ENCODE measurements at regions of chr1 and their contacts with region 1.

Region 1: DNA sequence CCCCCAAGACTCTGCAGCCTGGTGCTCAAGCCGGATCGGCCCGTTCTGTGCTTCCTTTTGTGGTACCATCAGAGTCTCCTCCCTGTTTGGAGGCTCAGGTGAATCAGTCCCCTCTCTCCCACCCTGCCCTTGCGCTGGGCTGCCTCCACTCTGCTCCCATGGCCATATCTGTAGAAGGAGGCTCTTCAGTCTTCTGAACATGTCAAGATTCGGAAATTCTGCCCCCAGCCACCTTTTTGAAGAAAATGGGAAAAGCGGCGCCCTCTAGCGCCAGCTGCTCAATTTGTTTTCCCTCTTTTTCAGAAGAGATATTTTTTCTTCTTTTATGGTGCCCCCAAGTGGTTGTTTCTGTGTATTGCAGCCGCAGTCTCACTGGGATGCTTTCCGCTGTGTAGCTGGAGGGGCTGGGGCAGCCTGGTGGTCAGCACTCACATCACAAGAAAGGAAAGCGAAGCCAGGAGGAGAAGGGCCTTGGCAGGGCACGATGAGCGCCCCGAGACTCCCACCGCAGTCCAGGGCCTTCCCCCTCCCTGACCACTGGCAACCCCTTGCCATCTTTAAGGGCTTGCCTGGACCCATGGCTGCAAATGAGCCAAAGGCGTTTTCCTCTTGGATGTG is 58.4 kb upstream of the CACNA1E start:
- DNase-seq: peak; percentile 66
- H3K4me3 Mint-ChIP-seq: no peak overlapping the region
- H3K27ac Mint-ChIP-seq: no peak overlapping the region
- H3K4me1 Mint-ChIP-seq: no peaks in the 10 kb centered on the region
- H3K27me3 Mint-ChIP-seq: peaks cover 14% of the 10 kb centered on the region

Region 2: GRCh38 chr1:181189691-181190363 is 235.1 kb before region 1 on chr1:
- intact Hi-C with region 1: loop called (anchors 1 kb)
- DNase-seq: peak; percentile 66
- H3K4me3 Mint-ChIP-seq: no peak overlapping the region
- H3K27ac Mint-ChIP-seq: no peak overlapping the region
- H3K4me1 Mint-ChIP-seq: no peaks in the 10 kb centered on the region
- H3K27me3 Mint-ChIP-seq: peaks cover 17% of the 10 kb centered on the region

Region 3: DNA sequence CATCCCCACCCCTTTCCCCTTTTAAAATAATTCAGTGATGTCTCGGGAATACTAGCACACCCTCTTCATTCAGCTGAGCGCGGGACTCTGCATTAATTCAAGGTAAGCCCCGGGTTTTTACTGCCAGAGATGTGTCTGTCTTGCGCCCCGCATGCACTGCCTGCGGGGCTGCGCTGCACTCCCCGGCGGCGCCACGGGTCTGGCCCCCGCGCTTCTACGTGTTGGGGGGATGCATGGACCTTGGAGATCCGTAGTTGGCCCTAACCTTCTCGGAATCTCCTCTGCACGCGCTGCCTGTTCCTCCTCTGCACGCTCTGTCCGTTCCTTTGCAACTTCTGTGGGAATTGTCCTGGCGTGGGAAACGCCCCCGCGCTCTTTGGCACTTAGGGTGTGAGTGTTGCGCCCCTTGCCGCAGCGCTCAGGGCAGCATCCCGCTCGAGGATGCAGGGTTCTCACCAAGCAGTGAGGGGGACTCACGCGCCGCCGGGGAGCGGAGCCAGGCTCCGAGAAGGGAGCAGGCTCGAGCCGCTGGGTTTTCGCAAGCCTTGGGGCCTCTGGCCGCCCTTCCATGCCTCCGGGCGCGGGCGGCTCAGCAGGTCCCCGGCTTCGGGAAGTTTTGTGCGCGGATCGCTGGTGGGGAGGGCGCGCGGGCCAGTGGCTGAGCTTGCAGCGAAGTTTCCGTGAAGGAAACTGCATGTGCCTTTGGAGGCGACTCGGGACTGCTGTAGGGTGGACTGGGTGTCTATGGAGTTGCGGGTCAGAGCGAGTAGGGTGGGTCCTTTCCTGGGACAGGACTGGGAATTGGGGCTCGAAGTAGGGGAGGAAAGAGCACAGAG is 106.7 kb before region 1 on chr1:
- intact Hi-C with region 1: loop called (anchors 10 kb)
- DNase-seq: no peak
- H3K4me3 Mint-ChIP-seq: peak overlapping the region; percentile 15
- H3K27ac Mint-ChIP-seq: no peak overlapping the region
- H3K4me1 Mint-ChIP-seq: peaks cover 7% of the 10 kb centered on the region
- H3K27me3 Mint-ChIP-seq: peaks cover 66% of the 10 kb centered on the region

Region 4: DNA sequence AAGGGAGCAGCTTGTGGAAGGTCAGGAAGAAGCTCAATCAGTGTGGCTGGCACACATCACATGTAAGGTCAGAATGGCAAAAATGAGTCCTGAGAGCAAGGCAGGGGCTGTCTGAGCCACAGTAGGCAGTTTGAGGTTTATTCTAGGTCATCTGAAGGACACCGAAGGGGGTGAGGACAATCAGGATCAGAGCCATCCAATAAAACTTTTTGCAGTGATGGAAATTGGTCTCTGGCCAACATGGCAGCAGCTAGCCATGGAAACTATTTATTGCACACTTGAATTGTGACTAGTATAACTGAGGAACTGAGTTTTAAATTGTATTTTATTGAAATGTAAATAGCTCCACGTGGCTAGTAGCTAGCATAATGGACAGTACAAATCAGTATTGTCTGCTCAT is 38.6 kb before region 1 on chr1:
- intact Hi-C with region 1: loop called (anchors 5 kb)
- DNase-seq: no peak
- H3K4me3 Mint-ChIP-seq: no peak overlapping the region
- H3K27ac Mint-ChIP-seq: no peak overlapping the region
- H3K4me1 Mint-ChIP-seq: peaks cover 4% of the 10 kb centered on the region
- H3K27me3 Mint-ChIP-seq: peaks cover 9% of the 10 kb centered on the region

Region 5: DNA sequence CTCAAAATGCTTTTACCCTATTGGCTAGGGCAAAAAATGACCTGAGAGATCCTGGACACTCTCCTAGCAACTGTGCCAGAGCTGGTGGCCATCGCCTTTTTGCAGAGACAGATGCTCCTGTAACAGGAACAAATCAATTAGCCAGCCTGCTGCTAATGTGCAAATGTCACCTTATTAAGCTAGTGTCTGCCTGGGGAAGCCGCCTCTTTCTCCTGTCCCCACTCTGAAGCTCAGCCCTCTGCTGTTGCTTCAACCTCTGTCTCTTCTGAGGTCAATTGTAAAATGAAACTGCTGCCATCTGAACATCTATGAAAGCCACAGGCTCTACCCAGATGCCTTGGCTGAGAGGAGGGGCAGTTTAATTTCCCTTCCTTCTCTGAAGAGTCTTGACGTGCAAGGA is 27.1 kb before region 1 on chr1:
- intact Hi-C with region 1: loop called (anchors 2 kb)
- DNase-seq: peak; percentile 12
- H3K4me3 Mint-ChIP-seq: peak overlapping the region; percentile 58
- H3K27ac Mint-ChIP-seq: peak overlapping the region; percentile 42
- H3K4me1 Mint-ChIP-seq: peaks cover 33% of the 10 kb centered on the region
- H3K27me3 Mint-ChIP-seq: no peaks in the 10 kb centered on the region

Measured in activated T-helper 1 cell treated with anti-CD3 and anti-CD28 coated beads, Interleukin-12 subunit alpha, Interleukin-12 subunit beta, Interleukin-2, Interleukin-4 antibody, amounts not matched to agents 30 ng/mL and 10 ng/mL and 1 ng/mL, durations not matched to agents 14 hours and 24 hours and 36 hours (primary cell).